Left cardiac atrium (tissue), 4 donors: ENCODE measurements at regions of chr6 and their contacts with region 1.

Region 1: DNA sequence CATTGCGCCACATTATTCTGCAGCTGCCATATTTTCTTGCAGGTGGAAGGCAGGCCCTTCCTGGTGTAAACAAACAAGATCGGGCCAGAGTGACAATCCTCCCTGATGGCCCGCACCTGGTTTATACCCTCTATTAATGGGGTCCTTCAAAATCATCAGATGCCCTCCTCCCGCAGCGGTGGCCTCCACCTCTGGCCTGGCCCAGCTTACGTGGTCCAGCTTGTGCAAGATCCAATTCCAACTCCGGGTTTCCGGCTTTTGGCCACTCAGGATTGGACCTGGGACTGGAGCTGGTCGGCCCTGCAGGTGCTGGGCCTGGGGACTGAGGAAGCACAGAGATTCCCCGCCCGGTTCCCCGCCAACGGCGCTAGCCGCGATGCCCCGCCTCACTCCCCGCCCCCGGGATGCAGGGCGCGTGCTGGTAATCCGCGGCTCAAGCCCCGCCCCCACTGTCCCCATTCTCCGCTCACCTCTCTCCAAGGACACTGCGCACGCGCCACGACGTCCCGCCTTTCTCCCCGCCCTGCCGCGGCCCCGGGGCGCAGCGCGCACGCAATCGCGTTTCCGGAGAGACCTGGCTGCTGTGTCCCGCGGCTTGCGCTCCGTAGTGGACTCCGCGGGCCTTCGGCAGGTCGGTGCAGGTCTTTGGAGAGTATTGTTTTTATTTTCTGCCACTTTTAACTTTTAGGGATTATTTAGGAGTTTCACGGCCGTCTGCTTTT is at the start of gene TMEM14B:
- DNase-seq: peak; percentile 100
- ATAC-seq: peak; percentile 99
- total RNA-seq, gene TMEM14B: 91.3 to 101 TPM

Region 2: DNA sequence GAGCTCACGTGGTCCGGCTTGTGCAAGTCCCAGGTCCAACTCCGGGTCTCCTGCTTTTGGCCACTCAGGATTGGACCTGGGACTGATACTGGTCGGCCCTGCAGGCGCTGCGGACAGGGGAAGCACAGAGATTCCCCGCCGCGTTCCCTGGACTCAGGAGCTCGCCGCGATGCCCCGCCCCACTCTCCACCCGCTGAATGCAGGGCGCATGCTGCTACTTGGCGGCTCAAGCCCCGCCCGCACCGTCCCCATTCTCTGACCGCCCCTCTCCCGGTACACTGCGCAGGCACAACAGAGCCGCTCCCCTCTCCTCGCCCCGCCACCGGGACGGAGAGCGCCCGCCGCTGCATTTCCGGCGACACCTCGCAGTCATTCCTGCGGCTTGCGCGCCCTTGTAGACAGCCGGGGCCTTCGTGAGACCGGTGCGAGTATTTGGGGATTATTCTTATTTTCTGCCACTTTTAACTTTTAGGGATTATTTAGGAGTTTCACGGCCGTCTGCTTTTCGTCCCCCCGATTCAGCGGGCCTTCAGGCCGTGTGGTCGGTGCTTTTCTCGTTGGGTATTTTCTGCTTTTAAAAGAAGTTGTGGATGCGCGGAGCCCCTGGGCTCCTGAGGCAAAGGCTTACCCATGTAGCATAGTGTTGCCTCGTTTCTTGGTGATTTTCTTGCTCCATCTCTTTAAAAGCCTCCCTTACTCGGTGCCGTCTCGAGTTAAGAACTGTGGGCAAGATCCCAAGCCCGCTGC is 24.4 kb before region 1 on chr6 and contains the start of gene TMEM14C:
- intact Hi-C with region 1: loop called in 1 of 2 experiments (anchors 1 kb)
- DNase-seq: peak; percentile 100
- ATAC-seq: peak; percentile 98 to 99
- total RNA-seq, gene TMEM14C: 103 to 108 TPM